Activated naive CD4-positive, alpha-beta T cell treated with anti-CD3 and anti-CD28 coated beads for 36 hours (primary cell): ENCODE measurements at regions of chr7 and their contacts with region 1.

Region 1: GRCh38 chr7:104943502-104944343 is 70.3 kb upstream of the KMT2E start:
- DNase-seq: peak; percentile 82
- H3K4me3 Mint-ChIP-seq: peak overlapping the region; percentile 97
- H3K27ac Mint-ChIP-seq: peak overlapping the region; percentile 100
- H3K4me1 Mint-ChIP-seq: peaks cover 59% of the 10 kb centered on the region
- H3K27me3 Mint-ChIP-seq: no peaks in the 10 kb centered on the region

Region 2: GRCh38 chr7:104814631-104815400 is 128.9 kb before region 1 on chr7:
- CTCF ChIA-PET with region 1: no interaction called
- intact Hi-C with region 1: no loop called
- DNase-seq: no peak
- H3K4me3 Mint-ChIP-seq: no peak overlapping the region
- H3K27ac Mint-ChIP-seq: no peak overlapping the region
- H3K4me1 Mint-ChIP-seq: peaks cover 3% of the 10 kb centered on the region
- H3K27me3 Mint-ChIP-seq: no peaks in the 10 kb centered on the region

Region 3: GRCh38 chr7:104983578-104984539 is 40.1 kb after region 1 on chr7:
- CTCF ChIA-PET with region 1: interaction called, 11 read pairs
- intact Hi-C with region 1: loop called (anchors 1 kb)
- DNase-seq: peak; percentile 89
- H3K4me3 Mint-ChIP-seq: peak overlapping the region; percentile 98
- H3K27ac Mint-ChIP-seq: peak overlapping the region; percentile 100
- H3K4me1 Mint-ChIP-seq: peaks cover 65% of the 10 kb centered on the region
- H3K27me3 Mint-ChIP-seq: no peaks in the 10 kb centered on the region

Region 4: GRCh38 chr7:105141068-105141467 is 197.3 kb after region 1 on chr7:
- CTCF ChIA-PET with region 1: no interaction called
- intact Hi-C with region 1: no loop called
- DNase-seq: no peak
- H3K4me3 Mint-ChIP-seq: no peak overlapping the region
- H3K27ac Mint-ChIP-seq: no peak overlapping the region
- H3K4me1 Mint-ChIP-seq: no peaks in the 10 kb centered on the region
- H3K27me3 Mint-ChIP-seq: no peaks in the 10 kb centered on the region

Region 5: GRCh38 chr7:105268511-105269392 is 325.0 kb after region 1 on chr7:
- CTCF ChIA-PET with region 1: no interaction called
- intact Hi-C with region 1: loop called (anchors 2 kb)
- DNase-seq: peak; percentile 14
- H3K4me3 Mint-ChIP-seq: peak overlapping the region; percentile 72
- H3K27ac Mint-ChIP-seq: peak overlapping the region; percentile 90
- H3K4me1 Mint-ChIP-seq: peaks cover 53% of the 10 kb centered on the region
- H3K27me3 Mint-ChIP-seq: no peaks in the 10 kb centered on the region

Region 6: DNA sequence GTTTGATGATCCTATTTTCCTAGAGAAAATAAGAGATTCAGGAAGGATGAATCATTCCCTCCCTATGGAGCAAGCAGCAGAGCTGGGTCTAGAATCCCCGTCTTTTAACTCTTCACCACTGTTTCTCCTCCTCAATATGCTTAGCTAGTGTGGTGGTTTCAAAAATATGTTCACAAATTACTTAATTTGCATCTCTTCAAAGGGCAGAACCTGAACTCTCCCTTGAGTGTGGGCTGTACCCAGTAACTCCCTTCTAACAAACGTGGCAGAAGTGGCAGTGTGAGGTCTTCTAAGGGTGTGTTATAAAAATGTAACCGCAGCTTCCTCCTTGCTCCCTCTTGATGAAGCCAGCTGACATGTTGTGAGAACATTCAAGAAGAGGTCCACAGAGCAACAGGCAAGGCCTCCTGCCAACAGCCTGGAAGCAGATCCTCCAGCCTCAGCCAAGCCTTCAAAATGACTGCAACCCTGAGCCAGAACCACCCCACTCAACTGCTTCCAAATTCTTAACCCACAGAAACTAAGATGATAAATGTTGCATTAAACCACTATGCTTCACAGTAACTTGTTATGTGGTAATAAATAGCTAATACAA is 408.4 kb after region 1 on chr7:
- CTCF ChIA-PET with region 1: no interaction called
- intact Hi-C with region 1: loop called (anchors 1 kb)
- DNase-seq: peak; percentile 77
- H3K4me3 Mint-ChIP-seq: no peak overlapping the region
- H3K27ac Mint-ChIP-seq: peak overlapping the region; percentile 85
- H3K4me1 Mint-ChIP-seq: peaks cover 64% of the 10 kb centered on the region
- H3K27me3 Mint-ChIP-seq: no peaks in the 10 kb centered on the region

Region 7: DNA sequence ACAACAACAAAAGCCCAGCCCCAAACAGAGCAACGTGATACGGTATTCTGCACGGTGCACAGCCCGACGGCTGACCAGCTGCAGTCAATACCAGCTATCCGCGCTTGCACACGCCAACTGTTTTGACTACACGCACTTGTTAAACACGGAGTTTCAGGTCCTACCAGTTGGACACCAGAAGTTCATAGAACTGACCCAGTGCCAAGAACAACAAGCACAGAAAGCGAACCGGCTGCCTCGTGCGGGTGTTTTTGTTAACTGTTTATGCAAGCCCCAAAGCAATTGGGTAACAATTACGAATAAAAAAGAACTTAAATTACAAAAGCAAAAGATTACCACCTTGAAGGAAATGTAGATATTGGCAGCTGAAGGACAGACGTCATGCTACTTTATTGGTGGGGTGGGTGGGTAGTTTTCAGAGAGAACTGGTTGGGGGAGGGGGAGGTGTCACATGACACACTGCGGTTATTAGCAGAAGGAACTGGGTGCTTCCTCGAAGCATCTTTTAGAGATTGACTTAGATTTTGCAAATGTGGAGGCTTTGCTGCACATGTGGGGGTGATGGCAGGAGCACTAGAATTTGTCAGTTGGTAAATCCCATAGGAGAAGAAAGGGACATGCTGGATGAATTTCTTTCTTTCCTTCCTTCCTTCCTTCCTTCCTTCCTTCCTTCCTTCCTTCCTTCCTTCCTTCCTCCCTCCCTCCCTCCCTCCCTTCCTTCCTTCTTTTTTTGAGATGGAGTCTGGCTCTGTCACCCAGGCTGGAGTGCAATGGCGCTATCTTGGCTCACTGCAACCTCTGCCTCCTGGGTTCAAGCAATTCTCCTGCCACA is 748.2 kb after region 1 on chr7:
- CTCF ChIA-PET with region 1: no interaction called
- intact Hi-C with region 1: loop called (anchors 5 kb)
- DNase-seq: peak; percentile 80
- H3K4me3 Mint-ChIP-seq: peak overlapping the region; percentile 77
- H3K27ac Mint-ChIP-seq: peak overlapping the region; percentile 79
- H3K4me1 Mint-ChIP-seq: peaks cover 36% of the 10 kb centered on the region
- H3K27me3 Mint-ChIP-seq: no peaks in the 10 kb centered on the region

Region 8: GRCh38 chr7:106112117-106112971 is 1168.6 kb after region 1 on chr7 and contains the start of gene SYPL1:
- CTCF ChIA-PET with region 1: no interaction called
- intact Hi-C with region 1: loop called (anchors 2 kb)
- DNase-seq: peak; percentile 94
- H3K4me3 Mint-ChIP-seq: peak within 1 kb of the TSS; percentile 85
- H3K27ac Mint-ChIP-seq: peak within 1 kb of the TSS; percentile 92
- H3K4me1 Mint-ChIP-seq: peaks cover 71% of the 10 kb centered on the region
- H3K27me3 Mint-ChIP-seq: no peaks in the 10 kb centered on the region
- total RNA-seq, gene SYPL1: 24.7 to 26.6 TPM

Region 9: GRCh38 chr7:106865130-106866041 is 1921.7 kb after region 1 on chr7 and contains the start of gene PIK3CG:
- CTCF ChIA-PET with region 1: no interaction called
- intact Hi-C with region 1: loop called (anchors 10 kb)
- DNase-seq: no peak
- H3K4me3 Mint-ChIP-seq: peak within 1 kb of the TSS; percentile 79
- H3K27ac Mint-ChIP-seq: peak within 1 kb of the TSS; percentile 65
- H3K4me1 Mint-ChIP-seq: peaks cover 77% of the 10 kb centered on the region
- H3K27me3 Mint-ChIP-seq: no peaks in the 10 kb centered on the region
- total RNA-seq, gene PIK3CG: 3.6 to 3.8 TPM